Activated T-helper 1 cell treated with anti-CD3 and anti-CD28 coated beads, Interleukin-12 subunit alpha, Interleukin-12 subunit beta, Interleukin-2, Interleukin-4 antibody, amounts not matched to agents 30 ng/mL and 10 ng/mL and 1 ng/mL, durations not matched to agents 14 hours and 24 hours and 36 hours (primary cell): ENCODE measurements at regions of chr5 and their contacts with region 1.

Region 1: DNA sequence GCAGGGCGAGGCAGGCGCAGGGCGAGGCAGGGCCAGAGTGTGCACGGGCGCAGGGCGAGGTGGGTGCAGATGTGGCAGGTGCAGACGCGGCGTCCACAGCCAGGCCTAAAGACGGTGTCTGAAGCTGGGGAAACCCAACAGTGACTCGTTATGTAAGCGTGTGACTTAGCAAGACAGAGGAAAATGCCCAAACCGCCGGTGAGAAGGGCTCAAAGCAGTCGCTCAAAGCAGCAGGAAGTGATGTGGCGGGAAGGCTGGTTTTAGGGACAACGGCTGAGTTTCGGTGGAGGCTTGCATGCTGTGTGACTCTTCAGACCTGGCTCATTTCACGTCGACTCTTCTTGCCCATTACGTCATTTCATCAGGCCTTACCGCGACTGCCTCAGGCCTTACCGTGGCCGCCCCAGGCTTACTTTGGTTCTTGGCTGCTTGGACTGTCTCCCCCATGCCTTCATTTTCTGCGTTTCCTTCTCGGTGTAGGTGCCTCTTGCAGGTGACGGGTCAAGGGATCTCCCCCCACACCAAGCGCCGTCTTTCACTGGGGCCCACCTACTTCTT is 50.5 kb upstream of the EXOC3 start:
- DNase-seq: peak; percentile 87
- H3K4me3 Mint-ChIP-seq: peak overlapping the region; percentile 74
- H3K27ac Mint-ChIP-seq: peak overlapping the region; percentile 98
- H3K4me1 Mint-ChIP-seq: peaks cover 36% of the 10 kb centered on the region
- H3K27me3 Mint-ChIP-seq: peaks cover 2% of the 10 kb centered on the region

Region 2: GRCh38 chr5:368183-369084 is 24.1 kb before region 1 on chr5:
- intact Hi-C with region 1: loop called (anchors 1 kb)
- DNase-seq: no peak
- H3K4me3 Mint-ChIP-seq: peak overlapping the region; percentile 48
- H3K27ac Mint-ChIP-seq: peak overlapping the region; percentile 71
- H3K4me1 Mint-ChIP-seq: peaks cover 32% of the 10 kb centered on the region
- H3K27me3 Mint-ChIP-seq: peaks cover 3% of the 10 kb centered on the region

Region 3: GRCh38 chr5:458547-459353 is 66.2 kb after region 1 on chr5:
- intact Hi-C with region 1: loop called (anchors 5 kb)
- DNase-seq: peak; percentile 56
- H3K4me3 Mint-ChIP-seq: peak overlapping the region; percentile 59
- H3K27ac Mint-ChIP-seq: peak overlapping the region; percentile 91
- H3K4me1 Mint-ChIP-seq: peaks cover 75% of the 10 kb centered on the region
- H3K27me3 Mint-ChIP-seq: no peaks in the 10 kb centered on the region